Astrocyte of the cerebellum (primary cell): ENCODE measurements at regions of chr2 and their contacts with region 1.

Region 1: GRCh38 chr2:225452677-225453076 is 53.2 kb downstream of the NYAP2 start:
- DNase-seq: peak; percentile 74
- H3K4me3 ChIP-seq: no peak overlapping the region
- CTCF ChIP-seq: no peak

Region 2: GRCh38 chr2:225399504-225399903 is 53.2 kb before region 1 on chr2 and contains the start of gene NYAP2:
- in situ Hi-C with region 1: loop called (anchors 5 kb)
- DNase-seq: no peak
- H3K4me3 ChIP-seq: no peak within 1 kb of the TSS
- CTCF ChIP-seq: no peak

Region 3: GRCh38 chr2:225494100-225494459 is 41.4 kb after region 1 on chr2:
- in situ Hi-C with region 1: loop called (anchors 5 kb)
- DNase-seq: peak; percentile 11
- H3K4me3 ChIP-seq: no peak overlapping the region
- CTCF ChIP-seq: no peak